Dendritic cell treated with granulocyte-macrophage colony-stimulating factor and Interleukin-4, amounts not matched to agents 40 ng/mL and 50 ng/mL, for 4 days (primary cell): ENCODE measurements at regions of chr10 and their contacts with region 1.

Region 1: GRCh38 chr10:79981450-79982361 is 32.8 kb upstream of the SFTPD start:
- H3K4me3 Mint-ChIP-seq: peak overlapping the region; percentile 87
- H3K27ac Mint-ChIP-seq: peak overlapping the region; percentile 89
- H3K4me1 Mint-ChIP-seq: peaks cover 34% of the 10 kb centered on the region
- H3K27me3 Mint-ChIP-seq: peaks cover 68% of the 10 kb centered on the region

Region 2: GRCh38 chr10:79938728-79939406 is 42.8 kb before region 1 on chr10:
- intact Hi-C with region 1: loop called (anchors 2 kb)
- H3K4me3 Mint-ChIP-seq: no peak overlapping the region
- H3K27ac Mint-ChIP-seq: peak overlapping the region; percentile 30
- H3K4me1 Mint-ChIP-seq: peaks cover 86% of the 10 kb centered on the region
- H3K27me3 Mint-ChIP-seq: peaks cover 47% of the 10 kb centered on the region